B cell (primary cell): ENCODE measurements at regions of chr3 and their contacts with region 1.

Region 1: GRCh38 chr3:9396700-9397521 is 504 bp upstream of the SETD5 start:
- DNase-seq: peak; percentile 99
- ATAC-seq: peak; percentile 70
- H3K4me3 ChIP-seq: peak overlapping the region; percentile 58 to 85 (median 67)
- H3K4me3 Mint-ChIP-seq: peak overlapping the region; percentile 89
- H3K27ac ChIP-seq: peak overlapping the region; percentile 94 to 96
- H3K27ac Mint-ChIP-seq: peak overlapping the region; percentile 100
- H3K4me1 ChIP-seq: peaks cover 40 to 56% of the 10 kb centered on the region in 2 donors
- H3K4me1 Mint-ChIP-seq: peaks cover 60% of the 10 kb centered on the region
- H3K27me3 ChIP-seq: no peaks in the 10 kb centered on the region
- H3K27me3 Mint-ChIP-seq: no peaks in the 10 kb centered on the region
- CTCF ChIP-seq: no peak

Region 2: GRCh38 chr3:8963137-8963869 is 433.6 kb before region 1 on chr3 and contains the start of gene RAD18:
- CTCF ChIA-PET with region 1: no interaction called
- POLR2A ChIA-PET with region 1: no interaction called
- intact Hi-C with region 1: loop called (anchors 1 kb)
- DNase-seq: peak; percentile 95
- ATAC-seq: peak; percentile 97
- H3K4me3 ChIP-seq: peak within 1 kb of the TSS; percentile 79 to 93 (median 85)
- H3K4me3 Mint-ChIP-seq: peak within 1 kb of the TSS; percentile 89
- H3K27ac ChIP-seq: peak within 1 kb of the TSS; percentile 81 to 93
- H3K27ac Mint-ChIP-seq: peak within 1 kb of the TSS; percentile 94
- H3K4me1 ChIP-seq: peaks cover 18 to 25% of the 10 kb centered on the region in 2 donors
- H3K4me1 Mint-ChIP-seq: peaks cover 34% of the 10 kb centered on the region
- H3K27me3 ChIP-seq: peaks cover 0 to 3% (median 0%) of the 10 kb centered on the region in 4 experiments
- H3K27me3 Mint-ChIP-seq: peaks cover 7% of the 10 kb centered on the region
- CTCF ChIP-seq: no peak
- total RNA-seq, gene RAD18: 20.6 and 21.3 TPM in 2 replicates

Region 3: GRCh38 chr3:9362731-9363530 is 34.0 kb before region 1 on chr3 and contains the start of gene THUMPD3:
- CTCF ChIA-PET with region 1: interaction called, 5 read pairs
- POLR2A ChIA-PET with region 1: interaction called, 39 read pairs
- intact Hi-C with region 1: loop called (anchors 1 kb)
- DNase-seq: peak; percentile 93
- ATAC-seq: peak; percentile 89
- H3K4me3 ChIP-seq: peak within 1 kb of the TSS; percentile 58 to 97 (median 92)
- H3K4me3 Mint-ChIP-seq: peak within 1 kb of the TSS; percentile 99
- H3K27ac ChIP-seq: peak within 1 kb of the TSS; percentile 85 to 95
- H3K27ac Mint-ChIP-seq: peak within 1 kb of the TSS; percentile 95
- H3K4me1 ChIP-seq: peaks cover 7 to 18% of the 10 kb centered on the region in 2 donors
- H3K4me1 Mint-ChIP-seq: peaks cover 14% of the 10 kb centered on the region
- H3K27me3 ChIP-seq: no peaks in the 10 kb centered on the region
- H3K27me3 Mint-ChIP-seq: no peaks in the 10 kb centered on the region
- CTCF ChIP-seq: no peak
- total RNA-seq, gene THUMPD3: 30.6 and 32.1 TPM in 2 replicates

Region 4: GRCh38 chr3:9430733-9431132 is 33.8 kb after region 1 on chr3:
- CTCF ChIA-PET with region 1: no interaction called
- POLR2A ChIA-PET with region 1: no interaction called
- intact Hi-C with region 1: loop called (anchors 5 kb)
- DNase-seq: no peak
- ATAC-seq: no peak
- H3K4me3 ChIP-seq: no peak overlapping the region
- H3K4me3 Mint-ChIP-seq: no peak overlapping the region
- H3K27ac ChIP-seq: no peak overlapping the region
- H3K27ac Mint-ChIP-seq: no peak overlapping the region
- H3K4me1 ChIP-seq: no peaks in the 10 kb centered on the region
- H3K4me1 Mint-ChIP-seq: peaks cover 3% of the 10 kb centered on the region
- H3K27me3 ChIP-seq: no peaks in the 10 kb centered on the region
- H3K27me3 Mint-ChIP-seq: no peaks in the 10 kb centered on the region
- CTCF ChIP-seq: no peak

Region 5: GRCh38 chr3:9512456-9513045 is 115.6 kb after region 1 on chr3:
- CTCF ChIA-PET with region 1: no interaction called
- POLR2A ChIA-PET with region 1: no interaction called
- intact Hi-C with region 1: no loop called
- DNase-seq: no peak
- ATAC-seq: no peak
- H3K4me3 ChIP-seq: no peak overlapping the region
- H3K4me3 Mint-ChIP-seq: no peak overlapping the region
- H3K27ac ChIP-seq: no peak overlapping the region
- H3K27ac Mint-ChIP-seq: no peak overlapping the region
- H3K4me1 ChIP-seq: no peaks in the 10 kb centered on the region
- H3K4me1 Mint-ChIP-seq: no peaks in the 10 kb centered on the region
- H3K27me3 ChIP-seq: peaks cover 0 to 27% (median 7%) of the 10 kb centered on the region in 4 experiments
- H3K27me3 Mint-ChIP-seq: peaks cover 17% of the 10 kb centered on the region
- CTCF ChIP-seq: no peak

Region 6: GRCh38 chr3:9595877-9596276 is 199.0 kb after region 1 on chr3:
- CTCF ChIA-PET with region 1: no interaction called
- POLR2A ChIA-PET with region 1: no interaction called
- intact Hi-C with region 1: no loop called
- DNase-seq: no peak
- ATAC-seq: no peak
- H3K4me3 ChIP-seq: no peak overlapping the region
- H3K4me3 Mint-ChIP-seq: no peak overlapping the region
- H3K27ac ChIP-seq: no peak overlapping the region
- H3K27ac Mint-ChIP-seq: no peak overlapping the region
- H3K4me1 ChIP-seq: no peaks in the 10 kb centered on the region
- H3K4me1 Mint-ChIP-seq: peaks cover 3% of the 10 kb centered on the region
- H3K27me3 ChIP-seq: peaks cover 0 to 10% (median 0%) of the 10 kb centered on the region in 4 experiments
- H3K27me3 Mint-ChIP-seq: peaks cover 26% of the 10 kb centered on the region
- CTCF ChIP-seq: no peak

Region 7: DNA sequence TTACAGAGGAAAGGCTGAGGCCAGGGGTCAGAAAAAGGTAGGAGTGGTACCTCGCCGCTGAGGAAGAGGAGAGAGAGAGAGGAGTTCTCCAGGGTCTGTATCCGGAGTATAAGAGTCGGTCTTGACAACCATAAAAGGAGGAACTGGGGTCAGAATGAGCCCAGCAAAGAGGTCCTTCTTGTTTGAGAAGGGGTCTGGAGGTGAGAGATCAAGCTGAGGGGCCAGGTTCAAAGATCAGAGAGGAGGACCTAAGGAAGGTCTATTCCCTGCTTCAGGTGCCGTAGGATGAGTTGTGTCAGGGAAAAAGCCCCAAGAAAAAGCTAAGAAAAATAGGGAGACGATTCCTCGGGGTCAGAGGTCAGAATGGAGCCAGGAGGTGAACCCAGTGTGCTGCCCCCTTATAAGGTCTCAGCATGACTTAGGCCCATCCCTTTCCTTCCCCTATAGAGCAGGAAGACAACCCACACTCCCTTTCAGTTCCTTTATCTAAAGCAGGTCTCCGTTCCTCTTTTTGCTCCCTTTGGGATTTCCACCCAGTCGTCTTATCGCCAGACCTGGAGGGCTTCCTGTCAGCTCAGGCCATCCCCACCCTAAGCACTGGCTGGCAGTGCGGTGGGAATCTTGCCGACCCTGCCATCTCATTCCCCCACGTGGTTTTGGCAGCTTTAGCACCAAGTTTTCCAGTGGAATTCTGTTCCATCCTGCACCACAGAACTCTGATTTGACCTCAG is 253.0 kb after region 1 on chr3:
- CTCF ChIA-PET with region 1: no interaction called
- POLR2A ChIA-PET with region 1: interaction called, 9 read pairs
- intact Hi-C with region 1: loop called (anchors 1 kb)
- DNase-seq: peak; percentile 81
- ATAC-seq: peak; percentile 44
- H3K4me3 ChIP-seq: peak overlapping the region; percentile 85 to 99 (median 99)
- H3K4me3 Mint-ChIP-seq: peak overlapping the region; percentile 95
- H3K27ac ChIP-seq: peak overlapping the region; percentile 92 to 95
- H3K27ac Mint-ChIP-seq: peak overlapping the region; percentile 97
- H3K4me1 ChIP-seq: peaks cover 43 to 59% of the 10 kb centered on the region in 2 donors
- H3K4me1 Mint-ChIP-seq: peaks cover 48% of the 10 kb centered on the region
- H3K27me3 ChIP-seq: no peaks in the 10 kb centered on the region
- H3K27me3 Mint-ChIP-seq: no peaks in the 10 kb centered on the region
- CTCF ChIP-seq: no peak

Region 8: DNA sequence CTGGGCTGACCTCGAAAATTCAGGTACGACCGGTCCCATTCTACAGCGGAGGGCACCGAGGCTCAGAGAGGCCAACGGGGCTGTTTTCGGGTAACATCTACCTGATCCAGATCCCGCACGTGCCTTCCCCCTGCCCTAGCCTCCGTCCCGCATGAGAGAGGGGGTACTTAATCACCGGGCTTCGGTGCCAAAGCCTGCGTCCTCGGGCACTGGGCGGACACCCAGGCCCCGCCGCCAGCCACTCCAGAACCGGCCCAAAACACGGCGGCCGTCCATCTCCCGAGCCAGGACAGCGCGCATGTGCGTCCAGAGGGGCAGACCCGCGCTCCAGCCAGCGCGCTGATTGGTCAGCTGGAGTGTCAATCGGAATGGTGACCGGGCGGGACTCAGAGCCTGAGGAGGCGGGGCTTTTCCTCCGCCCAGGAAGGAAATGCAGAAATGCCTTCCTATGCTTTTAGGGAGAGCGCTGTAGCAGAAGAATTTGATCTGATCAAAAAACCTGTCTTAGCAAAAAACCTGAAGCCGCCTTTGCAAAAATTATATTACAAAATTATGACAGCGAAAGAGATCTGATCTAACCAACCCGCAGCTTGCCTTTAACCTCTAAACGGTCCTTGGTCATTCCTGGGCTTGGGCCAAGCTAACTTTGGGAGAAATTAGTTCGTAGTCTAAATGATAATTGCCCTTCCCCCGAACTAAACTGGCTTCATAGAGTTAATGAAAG is 447.0 kb after region 1 on chr3 and contains the start of gene RPUSD3:
- CTCF ChIA-PET with region 1: no interaction called
- POLR2A ChIA-PET with region 1: no interaction called
- intact Hi-C with region 1: loop called (anchors 2 kb)
- DNase-seq: peak; percentile 97
- ATAC-seq: peak; percentile 100
- H3K4me3 ChIP-seq: peak within 1 kb of the TSS; percentile 60 to 96 (median 73)
- H3K4me3 Mint-ChIP-seq: peak within 1 kb of the TSS; percentile 98
- H3K27ac ChIP-seq: peak within 1 kb of the TSS; percentile 17 to 75
- H3K27ac Mint-ChIP-seq: peak within 1 kb of the TSS; percentile 92
- H3K4me1 ChIP-seq: peaks cover 8 to 17% of the 10 kb centered on the region in 2 donors
- H3K4me1 Mint-ChIP-seq: peaks cover 20% of the 10 kb centered on the region
- H3K27me3 ChIP-seq: no peaks in the 10 kb centered on the region
- H3K27me3 Mint-ChIP-seq: no peaks in the 10 kb centered on the region
- CTCF ChIP-seq: no peak
- total RNA-seq, gene RPUSD3: 60.7 and 62.1 TPM in 2 replicates